ENCODE measurements at regions of chr21 and their contacts with region 1.

Region 1: GRCh38 chr21:26715878-26716506 is 129.2 kb downstream of the ADAMTS1 start:
- DNase-seq: peak; percentile 41
- H3K4me3 ChIP-seq: no peak overlapping the region
- H3K27ac ChIP-seq: no peak overlapping the region
- H3K4me1 ChIP-seq: no peaks in the 10 kb centered on the region
- H3K27me3 ChIP-seq: no peaks in the 10 kb centered on the region
- CTCF ChIP-seq: peak; percentile 70

Region 2: GRCh38 chr21:25607151-25608043 is 1108.6 kb before region 1 on chr21 and contains the start of gene MRPL39:
- intact Hi-C with region 1: loop called (anchors 5 kb)
- DNase-seq: peak; percentile 89
- H3K4me3 ChIP-seq: peak within 1 kb of the TSS; percentile 91
- H3K27ac ChIP-seq: peak within 1 kb of the TSS; percentile 64
- H3K4me1 ChIP-seq: peaks cover 8% of the 10 kb centered on the region
- H3K27me3 ChIP-seq: no peaks in the 10 kb centered on the region
- CTCF ChIP-seq: peak; percentile 39
- total RNA-seq, gene MRPL39: 44.0 to 50.2 TPM

Region 3: DNA sequence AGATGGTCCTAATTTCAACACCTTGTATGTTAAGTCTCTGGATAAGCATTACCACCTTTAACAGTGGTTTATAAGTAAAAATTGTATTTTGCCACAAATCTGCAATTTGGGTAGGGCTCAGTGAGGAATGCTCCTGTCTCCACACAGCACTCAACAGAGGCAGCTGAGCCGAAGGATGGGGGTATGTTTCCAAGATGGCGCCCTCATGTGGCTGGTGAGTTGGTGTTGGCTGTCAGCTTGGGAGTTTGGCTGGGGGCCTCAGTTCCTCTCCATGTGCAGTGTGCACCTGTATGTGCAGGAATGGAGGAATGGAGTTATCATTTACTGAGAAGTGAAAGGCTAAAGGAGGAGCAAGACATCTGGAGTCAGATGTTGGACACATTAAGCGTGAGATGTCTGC is 844.4 kb before region 1 on chr21:
- intact Hi-C with region 1: loop called (anchors 10 kb)
- DNase-seq: no peak
- H3K4me3 ChIP-seq: no peak overlapping the region
- H3K27ac ChIP-seq: no peak overlapping the region
- H3K4me1 ChIP-seq: no peaks in the 10 kb centered on the region
- H3K27me3 ChIP-seq: no peaks in the 10 kb centered on the region
- CTCF ChIP-seq: no peak

Region 4: DNA sequence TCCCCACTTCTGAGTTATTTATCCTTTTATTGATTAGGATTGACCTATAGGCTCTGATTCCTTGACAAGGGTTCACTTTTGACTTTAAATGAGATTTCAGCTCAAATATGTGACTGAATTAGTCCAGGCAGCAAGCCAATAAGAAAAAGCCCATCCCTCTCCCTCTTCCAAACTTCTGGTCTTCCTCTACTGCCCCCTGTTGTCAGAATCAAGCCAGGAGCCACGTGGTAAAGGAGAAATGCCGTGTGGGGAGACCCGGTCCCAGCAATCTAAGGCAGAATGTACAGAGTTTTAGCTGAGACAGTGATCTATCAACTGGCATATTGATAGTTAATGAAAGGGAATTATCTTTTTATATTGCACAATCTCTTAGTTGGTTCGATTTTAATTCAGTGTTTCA is 245.7 kb after region 1 on chr21:
- intact Hi-C with region 1: no loop called
- DNase-seq: peak; percentile 26
- H3K4me3 ChIP-seq: no peak overlapping the region
- H3K27ac ChIP-seq: no peak overlapping the region
- H3K4me1 ChIP-seq: no peaks in the 10 kb centered on the region
- H3K27me3 ChIP-seq: peaks cover 12% of the 10 kb centered on the region
- CTCF ChIP-seq: no peak

Region 5: DNA sequence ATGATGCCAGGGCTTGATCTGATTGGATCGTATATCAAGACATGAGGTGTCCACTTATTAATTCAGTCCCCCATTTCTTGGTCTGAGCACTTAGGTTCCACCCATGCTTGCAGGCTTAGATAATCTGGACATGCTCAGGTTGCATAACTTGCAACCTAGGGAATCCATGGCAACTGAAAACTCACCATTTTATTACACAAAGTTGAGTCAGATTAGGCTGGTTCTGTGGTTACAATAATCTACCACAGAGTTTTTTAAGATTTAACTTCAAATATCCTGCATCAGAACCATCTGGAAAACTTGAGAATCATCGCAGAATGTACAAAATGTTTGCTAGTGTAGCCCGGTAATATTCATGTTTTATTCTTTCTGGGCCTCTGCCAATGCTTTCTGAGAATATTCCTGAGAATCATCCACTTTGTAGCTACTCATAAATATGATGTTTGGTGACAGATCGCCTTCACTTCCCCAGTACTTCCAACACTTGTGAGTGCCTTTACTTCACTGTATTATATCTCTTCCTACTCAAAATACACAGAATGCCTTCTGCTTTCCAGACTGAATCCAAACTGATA is 958.1 kb after region 1 on chr21:
- intact Hi-C with region 1: no loop called
- DNase-seq: no peak
- H3K4me3 ChIP-seq: no peak overlapping the region
- H3K27ac ChIP-seq: no peak overlapping the region
- H3K4me1 ChIP-seq: no peaks in the 10 kb centered on the region
- H3K27me3 ChIP-seq: no peaks in the 10 kb centered on the region
- CTCF ChIP-seq: no peak

Measured in colonic mucosa (tissue), 4 donors.